GM10248 (cell line): ENCODE measurements at regions of chr16 and their contacts with region 1.

Region 1: GRCh38 chr16:11407047-11407982 is 62.1 kb downstream of the RMI2 start:
- DNase-seq: peak; percentile 82
- CTCF ChIP-seq: peak; percentile 87

Region 2: GRCh38 chr16:10964039-10964890 is 443.1 kb before region 1 on chr16:
- CTCF ChIA-PET with region 1: interaction called, 62 read pairs
- POLR2A ChIA-PET with region 1: no interaction called
- DNase-seq: peak; percentile 75
- CTCF ChIP-seq: peak; percentile 95

Region 3: DNA sequence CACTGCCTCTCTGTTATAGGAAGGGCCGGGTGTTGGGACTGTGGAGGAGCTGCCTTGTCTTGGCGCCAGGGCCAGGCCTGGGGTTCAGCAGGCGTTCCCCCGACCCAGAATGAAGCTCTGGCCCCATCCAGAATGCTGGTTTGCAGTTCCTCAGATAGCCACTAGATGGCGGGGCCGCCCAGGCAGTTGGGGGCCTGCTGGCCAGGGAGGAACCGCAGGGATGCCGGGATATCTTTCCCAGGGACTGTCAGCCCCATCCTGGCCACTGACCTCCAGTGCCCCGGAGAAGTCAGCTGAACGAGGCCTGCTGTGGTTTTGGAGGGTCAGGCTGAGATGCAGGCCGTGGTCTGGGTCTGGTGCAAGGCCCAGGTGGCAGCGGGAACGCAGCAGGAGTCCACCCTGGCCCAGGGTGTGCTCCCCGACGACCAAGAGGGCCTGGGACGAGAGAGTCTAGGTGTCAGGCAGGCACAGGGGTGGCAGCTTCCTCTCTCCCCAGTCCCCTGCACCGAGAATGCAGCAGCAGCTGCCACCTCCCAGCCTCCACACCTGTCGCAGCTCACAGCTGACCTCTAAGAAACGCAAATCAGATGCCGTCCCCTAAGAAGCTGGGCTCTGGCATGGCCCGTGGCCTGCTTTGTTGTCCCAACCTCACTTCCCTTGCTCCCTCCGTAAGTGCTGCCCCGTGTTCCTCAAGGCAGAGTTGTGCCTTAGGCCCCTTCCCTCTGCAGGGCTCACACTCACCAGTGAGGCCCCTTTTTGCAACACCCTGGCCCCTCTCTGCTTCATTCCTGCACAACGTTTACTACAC is 10.9 kb before region 1 on chr16:
- CTCF ChIA-PET with region 1: interaction called, 249 read pairs
- POLR2A ChIA-PET with region 1: no interaction called
- DNase-seq: peak; percentile 89
- CTCF ChIP-seq: peak; percentile 97

Region 4: DNA sequence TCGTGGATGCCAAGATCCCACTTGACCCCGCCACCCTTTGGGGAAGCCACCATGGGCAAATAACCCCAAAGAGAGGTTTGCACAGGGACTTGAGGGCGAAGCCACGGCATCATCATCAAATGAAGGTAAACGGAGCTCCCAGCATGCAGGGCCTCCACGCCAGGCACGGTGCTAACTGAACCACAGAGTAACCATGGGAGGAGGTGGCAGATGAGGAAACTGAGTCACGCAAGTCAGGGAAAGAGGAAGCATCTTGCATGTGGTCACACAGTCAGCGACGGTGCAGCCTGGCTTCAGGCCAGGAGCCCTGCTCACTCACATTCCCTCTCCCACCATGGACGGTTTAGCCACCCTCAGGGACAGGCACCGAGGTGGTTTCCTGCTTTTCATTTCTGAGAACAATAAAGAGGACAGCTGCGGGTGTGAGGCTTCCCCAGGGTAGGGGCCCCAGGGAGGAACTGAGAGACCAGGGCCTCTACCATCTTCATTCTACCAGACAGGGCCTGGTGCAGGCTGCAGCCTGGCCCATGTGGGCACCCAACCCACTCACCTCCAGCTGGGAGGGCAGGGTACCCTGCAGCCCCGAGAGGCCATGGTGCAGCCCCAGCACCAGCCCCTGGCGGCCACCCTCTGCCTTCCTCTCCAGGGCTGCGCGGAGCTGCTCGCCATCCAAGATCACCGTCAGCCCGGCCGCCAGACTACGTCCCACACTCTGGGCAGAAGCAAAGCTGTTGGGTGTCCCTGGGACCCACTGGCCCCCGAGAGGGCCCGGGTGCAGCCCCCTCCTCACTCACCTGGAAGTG is 16.2 kb after region 1 on chr16:
- CTCF ChIA-PET with region 1: interaction called, 45 read pairs
- POLR2A ChIA-PET with region 1: interaction called, 3 read pairs
- DNase-seq: peak; percentile 58
- CTCF ChIP-seq: no peak

Region 5: DNA sequence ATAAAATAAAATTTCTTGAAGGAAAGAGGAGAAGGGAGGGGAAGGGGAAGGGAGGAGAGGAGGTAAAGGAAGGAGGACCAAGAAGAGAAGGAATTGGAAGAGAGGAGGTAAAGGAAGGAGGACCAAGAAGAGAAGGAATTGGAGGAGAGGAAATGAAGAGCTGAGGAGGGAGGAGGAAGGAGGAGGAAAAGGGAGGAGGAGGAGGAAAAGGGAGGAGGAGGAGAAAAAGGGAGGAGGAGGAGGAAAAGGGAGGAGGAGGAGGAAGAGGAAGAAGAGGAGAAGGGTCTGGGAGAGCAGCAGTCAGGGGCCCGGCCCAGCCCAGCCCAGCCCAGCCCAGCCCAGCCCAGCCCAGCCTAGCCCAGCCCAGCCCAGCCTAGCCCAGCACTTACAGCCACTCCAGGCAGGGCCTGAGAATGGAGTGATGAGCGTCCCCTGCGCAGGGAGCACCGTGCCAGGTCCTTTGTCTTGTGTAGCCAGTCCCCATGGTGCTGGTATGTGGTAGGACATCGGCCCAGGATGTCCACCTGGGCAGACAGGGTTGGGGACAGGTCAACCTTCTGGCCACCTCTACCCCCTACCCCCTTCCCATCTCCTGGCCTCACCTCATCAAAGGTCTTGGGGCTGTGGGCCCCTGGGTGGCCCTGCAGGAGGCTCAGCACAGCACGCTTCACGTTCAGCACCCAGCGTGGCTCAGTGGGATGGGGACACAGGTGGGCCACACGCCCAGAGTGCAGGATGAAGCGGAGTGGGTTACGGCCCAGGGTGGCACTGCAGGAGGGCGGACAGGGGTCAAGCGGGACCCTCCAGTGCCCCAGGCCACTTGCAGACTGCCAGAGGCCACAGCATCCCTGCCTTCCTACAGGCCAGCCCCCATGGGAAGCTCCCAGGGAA is 108.5 kb after region 1 on chr16:
- CTCF ChIA-PET with region 1: no interaction called
- POLR2A ChIA-PET with region 1: no interaction called
- DNase-seq: no peak
- CTCF ChIP-seq: no peak

Region 6: GRCh38 chr16:11535471-11535870 is 128.2 kb after region 1 on chr16:
- CTCF ChIA-PET with region 1: interaction called, 29 read pairs
- POLR2A ChIA-PET with region 1: no interaction called
- DNase-seq: no peak
- CTCF ChIP-seq: no peak

Region 7: DNA sequence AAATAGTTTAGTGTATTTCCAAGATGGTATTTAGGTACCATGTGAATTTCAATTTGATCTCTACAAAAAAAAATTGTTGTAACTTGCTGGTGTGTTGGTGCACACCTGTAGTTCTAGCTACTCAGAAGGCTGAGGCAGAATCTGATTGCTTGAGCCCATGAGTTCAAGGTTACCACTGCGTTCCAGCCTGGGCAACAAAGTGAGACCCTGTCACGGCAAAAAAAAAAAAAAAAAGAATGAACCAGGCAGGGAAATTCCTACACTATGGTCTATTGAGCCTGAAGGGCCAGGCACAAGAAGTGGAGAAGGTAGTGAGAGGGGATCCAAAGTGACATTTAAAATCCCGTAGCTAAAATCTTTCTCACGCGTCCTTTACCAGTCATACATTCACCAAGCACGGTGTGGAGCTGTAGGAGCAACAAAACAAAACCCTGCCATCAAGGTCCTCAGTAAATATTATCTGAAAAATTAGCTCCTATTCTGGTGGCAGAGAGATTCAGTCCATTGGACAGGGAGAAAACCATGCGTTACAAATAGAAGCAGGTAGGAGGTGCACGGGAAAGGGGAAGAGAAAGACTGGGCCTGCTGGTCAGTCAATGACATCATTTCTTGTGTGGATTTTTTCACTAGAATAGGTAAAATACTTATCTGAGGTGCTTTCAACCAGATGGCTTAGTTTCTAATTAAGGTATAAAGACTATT is 308.1 kb after region 1 on chr16:
- CTCF ChIA-PET with region 1: interaction called, 23 read pairs
- POLR2A ChIA-PET with region 1: no interaction called
- DNase-seq: peak; percentile 60
- CTCF ChIP-seq: no peak